Activated CD8-positive, alpha-beta T cell treated with anti-CD3 and anti-CD28 coated beads, Interleukin-2, amount 10 ng/mL, durations not matched to agents 7 days and 5 days (primary cell): ENCODE measurements at regions of chr22 and their contacts with region 1.

Region 1: DNA sequence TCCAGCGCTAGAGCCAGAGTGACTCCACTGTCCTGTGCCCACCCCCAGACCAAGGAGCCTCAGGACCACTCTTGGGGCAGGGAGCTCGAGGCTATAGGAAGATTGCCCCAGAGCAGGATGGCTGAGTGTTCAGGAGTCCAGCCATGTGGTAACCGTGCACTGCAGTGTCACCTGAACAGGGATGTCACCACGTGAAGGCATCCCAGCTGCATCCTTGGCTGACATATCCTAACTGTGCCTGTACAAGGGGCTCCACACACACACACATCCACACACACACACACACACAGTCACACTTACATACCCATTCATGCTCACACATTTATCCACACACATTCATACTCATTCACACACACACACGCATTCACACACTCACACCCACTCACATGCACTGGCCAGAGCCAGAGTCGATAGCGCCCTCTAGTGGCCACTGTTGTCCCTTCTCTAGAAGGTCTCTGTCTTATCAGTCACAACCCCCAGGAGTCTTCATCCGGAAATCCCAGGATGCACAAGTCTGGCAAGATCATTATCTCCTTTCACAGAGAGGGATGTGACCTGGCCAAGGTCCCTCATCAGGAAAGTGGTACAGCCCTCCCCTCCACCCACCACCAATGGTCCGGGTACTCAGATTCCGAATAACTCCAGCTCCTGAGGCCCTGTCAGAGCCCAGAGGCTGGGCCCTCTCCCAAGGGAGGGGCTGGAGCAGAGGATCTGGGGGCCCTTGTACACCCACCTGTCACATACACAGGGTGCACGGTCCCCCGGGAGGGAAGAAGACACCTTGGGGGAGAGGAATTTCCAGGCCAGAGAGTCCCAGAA is 55.1 kb downstream of the IGLL5 start:
- DNase-seq: peak; percentile 85
- ATAC-seq: peak; percentile 89
- H3K4me3 Mint-ChIP-seq: no peak overlapping the region
- H3K27ac Mint-ChIP-seq: no peak overlapping the region
- H3K4me1 Mint-ChIP-seq: no peaks in the 10 kb centered on the region
- H3K27me3 Mint-ChIP-seq: peaks cover 21% of the 10 kb centered on the region

Region 2: GRCh38 chr22:22863001-22863400 is 79.7 kb before region 1 on chr22:
- CTCF ChIA-PET with region 1: no interaction called
- POLR2A ChIA-PET with region 1: no interaction called
- DNase-seq: no peak
- ATAC-seq: no peak
- H3K4me3 Mint-ChIP-seq: no peak overlapping the region
- H3K27ac Mint-ChIP-seq: no peak overlapping the region
- H3K4me1 Mint-ChIP-seq: peaks cover 32% of the 10 kb centered on the region
- H3K27me3 Mint-ChIP-seq: peaks cover 53% of the 10 kb centered on the region

Region 3: DNA sequence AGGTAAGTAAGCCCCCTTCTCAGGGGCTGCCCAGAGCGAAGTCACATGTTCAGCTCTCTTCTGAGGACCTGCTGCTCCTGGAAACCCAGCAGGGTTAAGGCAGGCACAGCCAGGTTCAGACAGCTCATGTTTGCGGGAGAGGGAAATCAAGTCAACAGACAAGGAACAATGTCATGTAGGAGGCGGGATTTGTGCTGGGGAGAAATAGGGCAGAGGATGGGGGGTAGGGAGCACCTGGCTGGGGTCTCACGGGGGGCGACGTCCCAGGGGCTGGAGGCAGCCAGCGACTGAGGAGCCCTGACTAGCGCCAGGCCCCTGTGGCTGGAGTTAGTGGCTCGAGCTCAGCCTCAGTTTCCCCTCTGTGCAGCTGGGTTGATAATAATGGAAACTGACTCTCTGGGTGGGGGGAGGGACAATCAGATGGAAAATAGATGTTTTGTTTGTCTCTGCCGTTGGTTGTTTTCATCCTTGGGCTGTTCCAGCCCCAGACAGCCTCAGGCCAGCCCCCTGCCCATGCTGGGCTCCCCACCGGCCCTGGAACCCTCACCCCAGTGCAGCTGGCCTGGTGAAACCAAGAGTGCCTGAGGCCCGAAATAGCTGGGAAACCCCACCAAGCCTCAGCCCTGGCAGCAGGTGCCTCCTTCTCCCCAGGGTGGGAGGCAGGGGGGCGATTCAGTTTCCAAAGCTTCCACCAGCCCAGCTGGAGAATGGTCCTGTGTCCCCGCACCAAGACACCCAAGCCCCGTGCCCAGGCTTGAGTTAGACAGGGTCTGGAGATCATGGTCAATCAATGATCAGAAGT is 11.1 kb before region 1 on chr22:
- CTCF ChIA-PET with region 1: interaction called, 11 read pairs
- POLR2A ChIA-PET with region 1: interaction called, 3 read pairs
- DNase-seq: no peak
- ATAC-seq: no peak
- H3K4me3 Mint-ChIP-seq: no peak overlapping the region
- H3K27ac Mint-ChIP-seq: no peak overlapping the region
- H3K4me1 Mint-ChIP-seq: peaks cover 30% of the 10 kb centered on the region
- H3K27me3 Mint-ChIP-seq: peaks cover 2% of the 10 kb centered on the region

Region 4: GRCh38 chr22:23219822-23220484 is 277.2 kb after region 1 on chr22:
- CTCF ChIA-PET with region 1: no interaction called
- POLR2A ChIA-PET with region 1: no interaction called
- DNase-seq: peak; percentile 63
- ATAC-seq: peak; percentile 60
- H3K4me3 Mint-ChIP-seq: peak overlapping the region; percentile 33
- H3K27ac Mint-ChIP-seq: peak overlapping the region; percentile 76
- H3K4me1 Mint-ChIP-seq: peaks cover 89% of the 10 kb centered on the region
- H3K27me3 Mint-ChIP-seq: no peaks in the 10 kb centered on the region